Sciatic nerve (tissue), 2 donors: ENCODE measurements at regions of chr6 and their contacts with region 1.

Region 1: DNA sequence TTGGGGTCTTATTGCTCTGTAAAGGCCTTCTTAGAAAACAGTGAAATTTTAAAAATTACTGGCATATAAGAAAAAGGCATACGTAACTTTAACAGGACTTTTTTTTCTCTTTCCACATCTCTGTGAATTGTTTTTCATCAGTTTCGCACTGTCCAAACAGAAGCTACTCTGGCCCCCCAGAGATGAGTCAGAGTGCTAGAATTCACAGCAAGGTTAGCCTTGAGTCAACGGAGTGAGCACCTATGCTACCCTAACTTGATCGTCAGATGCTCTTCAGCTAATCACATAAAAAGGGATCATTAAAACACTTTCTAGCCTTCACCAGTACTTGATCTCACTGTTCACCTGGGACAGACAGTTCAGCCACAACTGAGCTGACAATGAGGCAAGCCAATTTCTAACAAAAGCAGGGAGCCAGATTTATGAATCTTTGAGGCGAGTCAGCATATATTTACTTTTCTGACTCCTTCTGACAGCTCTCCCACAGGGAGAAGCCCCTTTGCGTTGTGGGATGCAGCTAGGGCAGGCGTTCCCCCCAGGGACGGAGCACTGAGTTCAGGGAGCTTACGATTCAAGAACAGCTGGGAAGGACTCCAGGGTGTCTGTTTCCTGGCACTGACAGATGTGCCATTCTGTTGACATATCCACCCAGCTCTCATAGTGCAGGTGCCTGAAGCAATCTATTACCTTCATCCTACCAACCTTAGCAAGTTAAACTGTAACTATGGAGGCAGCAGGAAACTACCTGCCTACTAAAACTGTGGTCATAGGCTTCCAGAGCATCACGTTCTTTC is 46.4 kb upstream of the SPDEF start:
- DNase-seq: no peak
- ATAC-seq: no peak

Region 2: DNA sequence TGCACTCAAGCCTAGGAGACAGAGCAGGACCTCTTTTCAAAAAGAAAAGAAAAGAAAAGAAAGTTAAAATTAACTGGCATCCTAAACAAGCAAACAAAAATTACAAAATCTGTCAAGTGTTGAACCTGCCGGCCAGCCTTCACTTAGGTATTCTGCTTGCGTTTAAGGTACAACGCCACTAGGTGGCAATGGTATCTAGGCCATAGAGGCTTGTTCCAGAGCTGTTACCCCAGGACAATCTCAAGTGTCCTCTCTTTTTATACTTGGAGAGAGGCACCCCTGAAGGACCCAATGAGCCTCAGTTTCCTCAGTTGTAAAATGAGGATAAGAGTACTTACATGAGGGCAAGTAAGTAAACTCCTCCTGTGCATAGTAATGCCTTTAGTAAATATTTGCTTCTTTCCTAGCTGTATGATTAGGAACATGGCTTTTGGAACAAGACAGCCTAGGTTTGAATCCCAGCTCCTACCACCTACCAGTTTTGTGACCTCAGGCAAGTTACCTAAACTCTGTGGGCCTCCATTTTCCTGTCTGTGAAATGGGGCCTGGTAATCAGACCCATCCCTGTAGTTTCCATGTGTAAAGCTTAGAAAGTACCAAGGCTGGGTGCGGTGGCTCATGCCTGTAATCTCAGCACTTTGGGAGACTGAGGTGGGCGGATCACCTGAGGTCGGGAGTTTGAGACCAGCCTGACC is 142.5 kb before region 1 on chr6:
- intact Hi-C with region 1: loop called (anchors 10 kb)
- DNase-seq: no peak
- ATAC-seq: peak; percentile 63

Region 3: DNA sequence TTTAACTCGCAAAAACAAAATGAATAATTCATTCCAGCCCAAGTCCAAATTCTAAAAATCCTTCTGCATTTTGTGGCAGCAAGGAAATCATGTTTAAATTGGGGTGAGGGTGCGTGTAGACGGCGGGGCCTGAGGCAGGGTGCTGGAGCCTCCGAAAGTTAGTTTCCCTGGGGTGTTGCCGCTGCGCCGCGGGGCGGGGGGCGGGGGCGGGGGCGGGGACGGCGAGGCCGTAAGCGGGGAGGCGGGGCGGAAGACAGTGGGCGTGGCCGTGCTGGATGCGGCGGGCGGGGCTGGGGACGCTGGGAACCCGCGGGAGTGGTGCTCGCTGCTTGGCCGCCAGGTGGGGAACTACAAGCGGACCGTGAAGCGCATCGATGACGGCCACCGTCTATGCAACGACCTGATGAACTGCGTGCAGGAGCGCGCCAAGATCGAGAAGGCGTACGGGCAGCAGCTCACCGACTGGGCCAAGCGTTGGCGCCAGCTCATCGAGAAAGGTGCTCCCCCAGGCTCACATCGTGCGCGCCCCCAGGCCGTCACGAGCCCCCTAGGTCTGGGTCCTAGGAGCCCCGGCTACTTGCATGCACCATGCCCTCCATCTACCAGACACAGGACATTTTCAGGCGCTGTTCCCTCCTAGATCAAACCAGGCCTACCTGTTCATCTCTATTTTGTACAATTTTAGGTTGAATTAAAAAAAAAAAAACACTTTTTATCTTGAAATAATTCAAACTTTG is 75.4 kb before region 1 on chr6:
- intact Hi-C with region 1: loop called (anchors 5 kb)
- DNase-seq: peak; percentile 98
- ATAC-seq: peak; percentile 94

Region 4: DNA sequence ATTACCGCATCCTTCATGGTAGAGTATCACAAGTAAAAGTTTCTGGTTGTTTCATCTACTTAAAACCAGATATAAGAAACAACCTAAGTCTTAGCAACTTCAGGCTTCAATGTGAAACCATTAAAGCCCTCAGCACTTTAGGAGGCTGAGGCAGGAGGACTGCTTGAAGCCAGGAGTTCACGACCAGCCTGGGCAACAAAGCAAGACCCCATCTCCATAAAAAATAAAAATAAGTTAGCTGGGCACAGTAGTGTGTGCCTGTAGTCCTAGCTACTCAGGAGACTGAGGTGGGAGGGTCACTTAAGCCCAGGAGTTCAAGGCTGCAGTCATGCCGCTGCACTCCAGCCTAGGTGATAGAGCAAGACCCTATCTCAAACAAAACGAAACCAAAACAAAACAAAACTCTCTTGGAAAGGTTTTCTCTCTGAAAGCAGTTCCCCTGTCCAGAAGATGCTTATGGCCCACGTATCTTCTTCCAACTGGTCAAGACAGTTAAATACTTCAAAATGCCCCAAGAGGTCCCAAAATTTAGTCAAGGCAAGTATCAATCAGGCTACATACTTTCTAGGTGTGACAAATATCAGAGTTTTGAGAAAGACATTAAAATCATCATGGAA is 275.5 kb after region 1 on chr6:
- intact Hi-C with region 1: no loop called
- DNase-seq: no peak
- ATAC-seq: no peak

Region 5: GRCh38 chr6:35742797-35743196 is 1140.3 kb after region 1 on chr6:
- intact Hi-C with region 1: no loop called
- DNase-seq: no peak
- ATAC-seq: no peak